HEK293 (cell line): ENCODE measurements at regions of chr9 and their contacts with region 1.

Region 1: GRCh38 chr9:17116400-17116837 is 18.4 kb upstream of the CNTLN start:
- H3K4me3 ChIP-seq: no peak overlapping the region
- H3K27ac ChIP-seq: no peak overlapping the region
- H3K4me1 ChIP-seq: no peaks in the 10 kb centered on the region
- CTCF ChIP-seq: no peak

Region 2: DNA sequence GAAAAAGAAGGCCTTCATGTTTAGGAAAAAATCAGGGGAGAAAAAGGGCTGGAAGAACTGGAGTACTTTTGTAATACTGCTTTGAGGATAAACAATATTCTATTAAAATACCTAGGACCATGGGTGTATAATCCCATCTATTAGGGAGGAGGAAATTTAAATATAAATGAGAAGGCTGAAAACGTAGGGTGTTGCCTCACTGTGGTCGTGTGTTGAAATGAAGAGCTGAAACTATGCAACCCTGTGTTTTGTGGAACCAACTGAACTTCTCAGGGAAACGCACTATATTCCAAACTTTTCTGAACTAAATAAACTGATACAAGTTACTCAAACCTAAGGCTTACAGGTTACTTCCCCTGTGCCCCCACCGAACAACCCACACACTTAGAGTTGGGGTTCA is 13.9 kb after region 1 on chr9:
- CTCF ChIA-PET with region 1: interaction called, 17 read pairs
- POLR2A ChIA-PET with region 1: no interaction called
- H3K4me3 ChIP-seq: no peak overlapping the region
- H3K27ac ChIP-seq: no peak overlapping the region
- H3K4me1 ChIP-seq: no peaks in the 10 kb centered on the region
- CTCF ChIP-seq: no peak

Region 3: GRCh38 chr9:17402309-17402708 is 285.9 kb after region 1 on chr9:
- CTCF ChIA-PET with region 1: interaction called, 18 read pairs
- POLR2A ChIA-PET with region 1: no interaction called
- H3K4me3 ChIP-seq: no peak overlapping the region
- H3K27ac ChIP-seq: no peak overlapping the region
- H3K4me1 ChIP-seq: no peaks in the 10 kb centered on the region
- CTCF ChIP-seq: no peak